A673 (cell line): ENCODE measurements at regions of chr12 and their contacts with region 1.

Region 1: DNA sequence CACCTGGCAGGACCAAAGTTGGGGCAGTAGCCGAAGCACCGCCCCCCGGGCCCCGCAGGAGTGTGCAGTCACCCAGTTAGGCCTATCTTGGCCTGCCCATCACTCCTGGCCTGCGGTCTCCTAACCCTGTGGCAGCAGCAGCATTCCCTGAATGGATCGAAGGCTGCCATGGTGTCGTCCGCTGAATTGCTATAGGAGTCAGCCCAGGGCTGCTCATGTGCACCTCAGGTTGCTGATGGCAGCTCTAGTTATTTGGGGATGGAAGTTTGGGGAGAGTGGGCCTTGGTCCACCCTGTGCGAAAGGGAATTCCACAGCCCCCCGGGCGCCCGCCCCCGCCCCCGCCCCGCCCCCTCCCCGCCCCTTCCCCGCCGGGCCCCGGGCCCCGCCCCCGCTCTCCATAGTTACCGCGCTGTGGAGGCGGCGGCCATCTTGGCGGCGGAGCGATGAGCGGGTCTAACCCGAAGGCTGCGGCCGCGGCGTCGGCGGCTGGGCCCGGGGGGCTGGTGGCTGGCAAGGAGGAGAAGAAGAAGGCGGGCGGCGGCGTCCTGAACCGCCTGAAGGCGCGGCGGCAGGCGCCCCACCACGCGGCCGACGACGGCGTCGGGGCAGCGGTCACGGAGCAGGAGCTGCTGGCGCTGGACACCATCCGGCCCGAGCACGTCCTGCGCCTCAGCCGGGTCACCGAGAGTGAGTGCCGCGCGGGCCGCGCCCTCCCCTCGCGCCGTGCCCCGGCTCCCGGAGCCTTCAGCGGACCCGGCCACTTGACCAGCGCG is at the start of gene UNC119B:
- DNase-seq: peak; percentile 80
- H3K4me3 ChIP-seq: peak within 1 kb of the TSS; percentile 93
- H3K27ac ChIP-seq: peak within 1 kb of the TSS; percentile 90
- H3K4me1 ChIP-seq: peaks cover 5% of the 10 kb centered on the region
- H3K27me3 ChIP-seq: no peaks in the 10 kb centered on the region
- CTCF ChIP-seq: no peak
- total RNA-seq, gene UNC119B: 48.0 and 50.4 TPM in 2 replicates

Region 2: DNA sequence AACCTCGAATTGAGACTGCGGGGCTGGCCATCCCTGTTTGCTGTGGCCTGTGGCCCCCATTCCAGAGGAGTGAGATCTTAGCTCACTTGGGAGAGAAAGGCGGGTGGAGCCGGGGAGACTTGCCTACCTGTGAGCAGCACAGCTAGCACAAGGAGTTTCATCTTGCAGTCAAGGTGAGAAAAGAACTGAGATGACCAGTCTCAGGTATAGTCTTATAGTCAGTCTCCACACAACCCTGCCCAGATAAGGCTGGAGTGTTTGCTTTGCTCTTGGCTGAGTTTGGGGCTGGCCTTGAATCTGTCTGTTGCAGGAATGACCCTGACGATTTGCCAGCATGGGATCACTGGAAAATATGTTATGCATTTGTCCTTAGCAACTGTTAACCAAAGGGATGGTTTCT is 382.6 kb before region 1 on chr12 and contains the start of gene PLA2G1B:
- CTCF ChIA-PET with region 1: no interaction called
- POLR2A ChIA-PET with region 1: no interaction called
- intact Hi-C with region 1: loop called (anchors 5 kb)
- DNase-seq: no peak
- H3K4me3 ChIP-seq: no peak within 1 kb of the TSS
- H3K27ac ChIP-seq: no peak within 1 kb of the TSS
- H3K4me1 ChIP-seq: no peaks in the 10 kb centered on the region
- H3K27me3 ChIP-seq: no peaks in the 10 kb centered on the region
- CTCF ChIP-seq: no peak
- total RNA-seq, gene PLA2G1B: not detected in 2 replicates

Region 3: GRCh38 chr12:120580787-120581723 is 129.2 kb before region 1 on chr12 and contains the start of gene POP5:
- CTCF ChIA-PET with region 1: no interaction called
- POLR2A ChIA-PET with region 1: no interaction called
- intact Hi-C with region 1: loop called (anchors 1 kb)
- DNase-seq: peak; percentile 99
- H3K4me3 ChIP-seq: peak within 1 kb of the TSS; percentile 89
- H3K27ac ChIP-seq: peak within 1 kb of the TSS; percentile 59
- H3K4me1 ChIP-seq: peaks cover 10% of the 10 kb centered on the region
- H3K27me3 ChIP-seq: no peaks in the 10 kb centered on the region
- CTCF ChIP-seq: no peak
- total RNA-seq, gene POP5: 41.0 and 42.4 TPM in 2 replicates